Caco-2 (cell line): ENCODE measurements at regions of chr20 and their contacts with region 1.

Region 1: DNA sequence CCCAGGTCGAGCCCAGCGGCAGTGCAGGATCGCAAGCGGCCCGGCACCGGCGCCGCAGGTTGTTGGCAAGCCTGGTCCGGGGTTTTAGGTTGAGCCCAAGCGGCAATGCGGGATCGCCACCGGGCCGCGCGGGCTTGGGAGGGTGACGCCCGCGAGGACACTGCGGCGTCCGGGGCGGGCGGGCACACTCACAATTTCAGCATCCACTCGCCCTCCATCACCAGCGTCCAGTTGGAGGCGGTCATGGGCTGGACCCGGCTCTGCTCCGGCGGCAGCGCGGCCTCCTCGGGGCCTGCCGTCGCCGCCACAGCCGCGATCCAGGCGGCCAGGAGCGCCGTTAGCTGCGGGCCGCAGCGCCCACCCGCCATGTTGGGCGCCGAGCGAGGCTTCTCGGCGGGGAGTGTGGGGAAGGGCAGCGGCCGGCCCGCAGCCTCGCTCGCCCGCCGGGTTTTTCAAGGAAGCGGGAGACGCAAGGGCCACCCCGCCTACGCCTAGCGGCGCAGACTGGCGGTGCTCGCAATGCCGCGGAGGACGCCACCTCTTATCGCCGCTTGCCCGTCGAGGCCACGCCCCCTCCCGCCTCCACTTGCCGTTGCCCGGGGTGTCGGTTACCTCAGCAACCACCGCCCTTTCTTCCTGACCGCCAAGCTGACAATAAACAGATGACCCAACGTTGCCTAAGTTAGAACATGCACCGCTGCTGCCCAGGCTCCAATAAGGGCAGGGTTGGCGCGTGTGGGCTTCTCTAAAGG is at the start of gene TMX4:
- DNase-seq: peak; percentile 97 to 98
- H3K4me3 ChIP-seq: peak within 1 kb of the TSS; percentile 93
- H3K4me3 Mint-ChIP-seq: peak within 1 kb of the TSS; percentile 77
- H3K27ac Mint-ChIP-seq: peak within 1 kb of the TSS; percentile 15
- H3K4me1 ChIP-seq: peaks cover 4% of the 10 kb centered on the region; the same call in 1 of the 2 replicates
- H3K4me1 Mint-ChIP-seq: no peaks in the 10 kb centered on the region
- H3K27me3 ChIP-seq: no peaks in the 10 kb centered on the region; the same call in 1 of the 2 replicates
- H3K27me3 Mint-ChIP-seq: no peaks in the 10 kb centered on the region
- CTCF ChIP-seq: peak; percentile 24 to 42
- total RNA-seq, gene TMX4: 13.6 and 17.0 TPM in 2 replicates

Region 2: GRCh38 chr20:7828437-7828836 is 191.0 kb before region 1 on chr20:
- CTCF ChIA-PET with region 1: no interaction called
- POLR2A ChIA-PET with region 1: no interaction called
- intact Hi-C with region 1: no loop called
- DNase-seq: no peak
- H3K4me3 ChIP-seq: no peak overlapping the region
- H3K4me3 Mint-ChIP-seq: no peak overlapping the region
- H3K27ac Mint-ChIP-seq: no peak overlapping the region
- H3K4me1 ChIP-seq: no peaks in the 10 kb centered on the region
- H3K4me1 Mint-ChIP-seq: no peaks in the 10 kb centered on the region
- H3K27me3 ChIP-seq: no peaks in the 10 kb centered on the region
- H3K27me3 Mint-ChIP-seq: peaks cover 2% of the 10 kb centered on the region
- CTCF ChIP-seq: no peak

Region 3: DNA sequence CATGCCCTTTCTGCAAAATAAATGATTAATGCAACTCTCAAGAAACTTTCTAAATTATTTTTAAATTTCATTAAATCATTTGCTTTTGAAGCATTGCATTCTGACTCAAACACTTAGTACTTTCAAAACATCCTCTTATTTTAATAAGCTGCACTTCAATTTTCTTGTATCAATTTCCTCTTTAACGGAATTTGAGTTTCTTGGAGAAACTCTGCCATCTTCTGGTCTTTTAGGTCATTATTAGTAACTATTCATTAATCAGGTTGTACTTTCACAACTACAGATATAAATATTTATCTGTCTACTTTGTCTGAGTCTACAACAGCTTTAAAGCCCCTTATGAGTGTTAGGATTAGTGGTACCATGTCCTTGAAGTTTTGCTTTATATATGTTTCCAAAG is 30.0 kb before region 1 on chr20:
- CTCF ChIA-PET with region 1: no interaction called
- POLR2A ChIA-PET with region 1: no interaction called
- intact Hi-C with region 1: no loop called
- DNase-seq: no peak
- H3K4me3 ChIP-seq: no peak overlapping the region
- H3K4me3 Mint-ChIP-seq: no peak overlapping the region
- H3K27ac Mint-ChIP-seq: no peak overlapping the region
- H3K4me1 ChIP-seq: no peaks in the 10 kb centered on the region
- H3K4me1 Mint-ChIP-seq: no peaks in the 10 kb centered on the region
- H3K27me3 ChIP-seq: no peaks in the 10 kb centered on the region
- H3K27me3 Mint-ChIP-seq: no peaks in the 10 kb centered on the region
- CTCF ChIP-seq: peak in 1 of 2 experiments; percentile 12

Region 4: DNA sequence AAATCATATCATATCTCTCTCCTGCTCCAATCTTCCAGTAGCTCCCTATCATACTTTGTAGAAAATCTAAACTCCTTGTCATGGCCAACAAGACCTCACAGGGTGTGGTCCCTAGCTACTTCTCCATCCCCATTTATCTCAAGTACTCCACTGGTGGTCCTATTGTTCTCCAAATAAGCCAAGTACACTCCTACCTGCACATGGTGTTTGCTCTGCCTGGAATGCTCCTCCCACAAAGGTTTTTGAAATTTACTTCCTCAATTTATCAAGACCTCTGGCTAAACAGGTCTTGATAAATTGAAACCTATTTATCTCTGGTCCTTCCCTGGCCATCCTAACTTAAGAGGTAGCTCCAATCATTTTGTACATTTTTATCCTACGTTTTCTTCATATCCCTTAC is 11.9 kb before region 1 on chr20:
- CTCF ChIA-PET with region 1: no interaction called
- POLR2A ChIA-PET with region 1: no interaction called
- intact Hi-C with region 1: loop called (anchors 1 kb)
- DNase-seq: no peak
- H3K4me3 ChIP-seq: no peak overlapping the region
- H3K4me3 Mint-ChIP-seq: no peak overlapping the region
- H3K27ac Mint-ChIP-seq: no peak overlapping the region
- H3K4me1 ChIP-seq: no peaks in the 10 kb centered on the region
- H3K4me1 Mint-ChIP-seq: no peaks in the 10 kb centered on the region
- H3K27me3 ChIP-seq: no peaks in the 10 kb centered on the region
- H3K27me3 Mint-ChIP-seq: no peaks in the 10 kb centered on the region
- CTCF ChIP-seq: no peak

Region 5: DNA sequence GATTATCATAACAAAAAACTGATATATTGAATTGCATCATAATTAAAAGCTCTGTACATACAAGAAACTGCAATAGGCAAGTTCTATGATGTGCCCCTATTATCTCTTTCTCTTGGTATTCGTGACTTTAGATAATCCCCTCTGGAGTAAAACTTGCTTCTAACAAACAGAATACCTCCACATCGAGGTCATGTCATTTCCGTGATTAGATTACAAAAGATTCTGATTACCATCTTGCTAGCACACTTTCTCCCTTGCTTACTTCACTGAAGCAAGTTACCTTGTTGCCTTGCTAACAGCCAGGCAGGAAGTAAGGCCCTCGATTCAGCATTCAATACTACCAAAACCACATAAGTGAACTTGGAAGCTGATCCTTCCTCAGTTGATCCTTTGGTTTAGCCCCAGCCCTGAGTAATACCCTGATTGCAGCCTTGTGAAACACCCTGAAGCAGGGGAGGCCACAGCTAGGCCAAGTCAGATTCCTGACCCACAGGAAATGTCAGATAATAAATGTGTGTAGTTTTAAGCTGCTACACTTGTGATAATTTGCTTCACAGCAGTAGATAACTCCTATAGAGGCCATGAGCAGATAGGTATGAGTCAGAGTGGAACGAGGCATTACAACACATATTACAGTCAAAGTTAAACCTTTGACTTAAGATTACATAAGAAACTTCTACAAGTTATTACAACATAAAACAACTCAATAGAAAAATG is 53.9 kb after region 1 on chr20:
- CTCF ChIA-PET with region 1: no interaction called
- POLR2A ChIA-PET with region 1: no interaction called
- intact Hi-C with region 1: loop called (anchors 1 kb)
- DNase-seq: peak; percentile 73 to 87
- H3K4me3 ChIP-seq: no peak overlapping the region
- H3K4me3 Mint-ChIP-seq: peak overlapping the region; percentile 40
- H3K27ac Mint-ChIP-seq: peak overlapping the region; percentile 85
- H3K4me1 ChIP-seq: peaks cover 28% of the 10 kb centered on the region
- H3K4me1 Mint-ChIP-seq: peaks cover 30% of the 10 kb centered on the region
- H3K27me3 ChIP-seq: no peaks in the 10 kb centered on the region
- H3K27me3 Mint-ChIP-seq: no peaks in the 10 kb centered on the region
- CTCF ChIP-seq: no peak